Common myeloid progenitor, CD34-positive (primary cell): ENCODE measurements at regions of chr7 and their contacts with region 1.

Region 1: DNA sequence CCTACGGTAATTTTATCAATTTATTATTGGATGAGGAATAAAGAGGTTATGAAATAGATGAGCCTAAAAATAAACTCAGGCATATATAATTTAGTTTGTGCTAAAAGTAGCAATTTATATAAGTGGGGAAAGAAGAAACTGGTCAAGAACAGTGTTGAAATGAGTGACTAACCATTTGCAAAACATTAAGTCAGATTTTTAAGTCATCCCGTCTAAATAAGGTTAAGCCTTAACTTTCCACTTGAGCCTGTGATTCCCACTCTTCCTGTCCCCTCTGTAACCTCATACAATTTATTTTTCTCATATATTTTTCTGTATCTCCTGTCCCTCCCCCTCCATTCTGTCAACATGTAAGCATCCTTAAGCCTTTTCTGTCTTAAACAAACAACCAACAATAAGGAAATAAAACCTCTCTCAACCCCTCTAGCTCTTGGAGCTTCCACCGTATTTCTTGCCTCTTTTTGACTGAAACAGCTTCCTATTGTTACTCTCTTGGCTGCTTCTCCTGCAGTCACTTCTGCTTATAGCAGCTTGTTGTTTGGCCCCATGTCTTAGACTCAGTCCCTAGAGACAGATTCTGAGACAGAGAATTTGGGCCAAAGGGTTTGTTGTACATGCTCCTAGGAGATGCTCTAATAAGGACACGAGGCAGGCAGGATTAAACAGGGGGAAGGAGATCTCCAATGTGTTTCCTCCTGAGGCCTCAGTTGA is 109.7 kb downstream of the GNAI1 start:
- DNase-seq: peak in 2 of 3 donors; percentile 21 to 36
- H3K4me3 ChIP-seq: no peak overlapping the region
- H3K27ac ChIP-seq: no peak overlapping the region
- H3K4me1 ChIP-seq: peaks cover 2 to 9% (median 5%) of the 10 kb centered on the region in 4 experiments
- H3K27me3 ChIP-seq: no peaks in the 10 kb centered on the region

Region 2: DNA sequence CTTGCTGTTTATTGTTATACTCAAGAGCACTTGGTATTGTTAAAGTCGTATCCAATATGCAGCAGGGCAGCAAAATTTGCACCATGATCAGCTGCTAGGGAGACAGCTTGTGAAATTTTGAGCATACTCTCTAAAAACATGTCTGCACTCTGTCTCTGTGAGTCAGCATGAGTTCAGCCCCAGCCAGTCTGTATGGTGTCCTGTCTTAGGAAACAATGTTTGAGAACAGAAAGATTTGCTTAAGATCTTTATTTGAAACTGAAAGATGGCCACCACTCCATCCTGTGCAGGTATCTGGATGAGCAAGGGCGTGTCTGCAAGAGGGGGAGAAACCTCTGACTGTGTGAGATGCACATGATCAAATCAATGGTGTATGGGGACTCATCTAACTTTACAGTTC is 12.7 kb before region 1 on chr7:
- CTCF ChIA-PET with region 1: interaction called, 15 read pairs
- POLR2A ChIA-PET with region 1: no interaction called
- DNase-seq: no peak
- H3K4me3 ChIP-seq: no peak overlapping the region
- H3K27ac ChIP-seq: no peak overlapping the region
- H3K4me1 ChIP-seq: peaks cover 0 to 5% (median 1%) of the 10 kb centered on the region in 4 experiments
- H3K27me3 ChIP-seq: no peaks in the 10 kb centered on the region

Region 3: GRCh38 chr7:80346704-80347103 is 102.3 kb after region 1 on chr7:
- CTCF ChIA-PET with region 1: no interaction called
- POLR2A ChIA-PET with region 1: no interaction called
- DNase-seq: no peak
- H3K4me3 ChIP-seq: no peak overlapping the region
- H3K27ac ChIP-seq: no peak overlapping the region
- H3K4me1 ChIP-seq: no peaks in the 10 kb centered on the region
- H3K27me3 ChIP-seq: no peaks in the 10 kb centered on the region

Region 4: GRCh38 chr7:80681272-80681885 is 437.0 kb after region 1 on chr7:
- CTCF ChIA-PET with region 1: no interaction called
- POLR2A ChIA-PET with region 1: no interaction called
- DNase-seq: peak; percentile 25 to 60 (median 55)
- H3K4me3 ChIP-seq: no peak overlapping the region
- H3K27ac ChIP-seq: no peak overlapping the region
- H3K4me1 ChIP-seq: peaks cover 0 to 3% (median 0%) of the 10 kb centered on the region in 4 experiments
- H3K27me3 ChIP-seq: no peaks in the 10 kb centered on the region